Esophagus muscularis mucosa (tissue), 4 donors: ENCODE measurements at regions of chr4 and their contacts with region 1.

Region 1: DNA sequence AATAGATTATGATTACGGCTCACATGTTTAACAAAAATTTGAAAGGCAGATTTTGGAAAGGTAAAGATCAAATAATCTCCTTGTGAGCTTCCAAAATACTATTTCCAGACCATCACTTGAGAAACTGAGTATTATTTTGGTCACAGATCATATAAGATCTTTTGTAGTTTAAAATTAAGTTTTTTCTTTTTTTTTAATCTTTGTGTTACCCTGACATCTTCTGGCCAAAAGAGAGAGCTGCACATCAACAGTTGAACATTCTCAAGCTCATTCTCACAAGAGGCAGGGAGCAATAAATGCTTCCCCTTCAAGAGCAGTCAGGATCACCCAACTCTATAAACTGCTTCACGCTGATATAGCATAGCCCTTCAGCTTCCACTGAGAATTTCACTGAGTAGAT is 15.9 kb downstream of the TMEM192 start:
- DNase-seq: no peak
- H3K4me3 ChIP-seq: no peak overlapping the region
- H3K27ac ChIP-seq: no peak overlapping the region
- H3K4me1 ChIP-seq: no peaks in the 10 kb centered on the region
- H3K27me3 ChIP-seq: no peaks in the 10 kb centered on the region
- CTCF ChIP-seq: peak; percentile 26 to 50 (median 30)
- EP300 ChIP-seq: no peak
- POLR2A ChIP-seq: no peak

Region 2: DNA sequence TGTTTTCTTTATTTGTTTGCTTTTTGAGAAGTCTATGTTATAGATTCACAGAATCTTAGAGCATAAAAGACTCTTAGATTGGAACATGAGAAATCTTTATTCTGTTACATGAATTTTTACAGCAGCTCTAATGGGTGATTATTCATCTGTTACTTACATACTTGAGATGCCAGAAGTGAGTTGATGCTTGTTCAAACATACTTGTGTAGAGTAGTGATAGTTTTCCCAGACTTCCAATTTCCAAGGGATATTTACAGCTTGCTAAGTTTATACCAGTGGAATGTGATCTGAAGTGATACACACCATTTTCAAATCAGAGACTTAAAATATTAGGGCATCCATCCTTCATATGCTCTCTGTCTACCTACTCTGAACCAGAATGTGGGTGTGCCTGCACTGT is 595.7 kb before region 1 on chr4:
- intact Hi-C with region 1: no loop called
- DNase-seq: no peak
- H3K4me3 ChIP-seq: no peak overlapping the region
- H3K27ac ChIP-seq: no peak overlapping the region
- H3K4me1 ChIP-seq: no peaks in the 10 kb centered on the region
- H3K27me3 ChIP-seq: no peaks in the 10 kb centered on the region
- CTCF ChIP-seq: no peak
- EP300 ChIP-seq: no peak
- POLR2A ChIP-seq: no peak

Region 3: DNA sequence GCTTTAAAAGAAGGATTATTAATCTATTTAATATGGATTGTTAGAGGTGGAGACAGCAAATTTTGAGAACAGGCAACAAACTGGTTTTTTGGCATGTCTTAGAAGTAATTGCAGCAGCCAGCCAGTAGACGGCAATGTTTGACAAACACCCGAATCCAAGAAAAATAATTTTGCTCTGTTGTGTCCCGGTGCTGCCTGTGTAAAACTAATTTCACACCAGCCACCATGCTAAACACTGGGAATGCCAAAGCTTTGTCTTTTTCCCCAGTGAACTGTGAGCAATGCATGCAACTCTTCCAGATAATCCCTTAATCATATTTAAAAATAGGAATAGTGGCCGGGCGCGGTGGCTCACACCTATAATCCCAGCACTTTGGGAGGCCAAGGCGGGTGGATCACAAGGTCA is 317.0 kb before region 1 on chr4:
- intact Hi-C with region 1: loop called (anchors 10 kb)
- DNase-seq: no peak
- H3K4me3 ChIP-seq: no peak overlapping the region
- H3K27ac ChIP-seq: no peak overlapping the region
- H3K4me1 ChIP-seq: no peaks in the 10 kb centered on the region
- H3K27me3 ChIP-seq: no peaks in the 10 kb centered on the region
- CTCF ChIP-seq: peak; percentile 43 to 76 (median 49)
- EP300 ChIP-seq: no peak
- POLR2A ChIP-seq: no peak